WTC11 (cell line): ENCODE measurements at regions of chr15 and their contacts with region 1.

Region 1: DNA sequence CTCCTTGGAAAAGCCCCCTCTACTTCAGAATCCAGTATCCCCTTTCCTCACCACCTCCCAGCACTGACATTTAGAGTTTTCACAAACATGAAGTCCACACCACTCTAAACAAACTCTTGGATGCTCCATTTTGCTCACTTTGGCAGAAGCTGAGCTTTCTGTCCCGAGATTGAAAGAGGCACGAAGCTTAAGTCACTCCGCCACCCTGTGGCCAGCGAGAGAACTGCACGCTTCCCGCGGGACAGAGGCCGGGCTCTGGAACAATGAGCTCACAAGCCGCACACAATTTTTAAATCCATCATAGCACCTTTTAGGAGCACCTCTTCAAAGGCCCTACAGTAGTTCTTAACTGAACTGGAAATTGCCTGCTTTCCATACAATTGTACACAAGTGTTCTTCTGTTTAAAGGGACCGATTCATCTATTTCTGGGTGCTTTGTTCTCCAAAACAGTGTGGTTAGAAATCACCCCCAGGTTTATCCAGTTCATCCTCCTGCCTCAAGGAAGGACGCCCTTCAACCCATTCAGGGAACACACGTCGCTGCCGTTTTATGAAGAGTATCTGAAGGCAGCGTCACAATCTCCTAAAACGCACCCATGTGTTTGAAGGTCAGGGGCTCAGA is 226.1 kb downstream of the VPS13C start:
- DNase-seq: peak; percentile 87
- ATAC-seq: peak; percentile 48
- H3K4me3 Mint-ChIP-seq: no peak overlapping the region
- H3K27ac Mint-ChIP-seq: no peak overlapping the region
- H3K4me1 Mint-ChIP-seq: peaks cover 20% of the 10 kb centered on the region
- H3K27me3 Mint-ChIP-seq: no peaks in the 10 kb centered on the region
- CTCF ChIP-seq: peak; percentile 95

Region 2: GRCh38 chr15:61169904-61170695 is 664.1 kb before region 1 on chr15:
- CTCF ChIA-PET with region 1: interaction called, 67 read pairs
- POLR2A ChIA-PET with region 1: no interaction called
- DNase-seq: no peak
- ATAC-seq: peak; percentile 13
- H3K4me3 Mint-ChIP-seq: peak overlapping the region; percentile 8
- H3K27ac Mint-ChIP-seq: peak overlapping the region; percentile 98
- H3K4me1 Mint-ChIP-seq: peaks cover 72% of the 10 kb centered on the region
- H3K27me3 Mint-ChIP-seq: no peaks in the 10 kb centered on the region
- CTCF ChIP-seq: no peak

Region 3: GRCh38 chr15:61530779-61531178 is 303.4 kb before region 1 on chr15:
- CTCF ChIA-PET with region 1: interaction called, 39 read pairs
- POLR2A ChIA-PET with region 1: interaction called, 4 read pairs
- DNase-seq: peak; percentile 35
- ATAC-seq: peak; percentile 84
- H3K4me3 Mint-ChIP-seq: no peak overlapping the region
- H3K27ac Mint-ChIP-seq: no peak overlapping the region
- H3K4me1 Mint-ChIP-seq: peaks cover 18% of the 10 kb centered on the region
- H3K27me3 Mint-ChIP-seq: no peaks in the 10 kb centered on the region
- CTCF ChIP-seq: no peak

Region 4: DNA sequence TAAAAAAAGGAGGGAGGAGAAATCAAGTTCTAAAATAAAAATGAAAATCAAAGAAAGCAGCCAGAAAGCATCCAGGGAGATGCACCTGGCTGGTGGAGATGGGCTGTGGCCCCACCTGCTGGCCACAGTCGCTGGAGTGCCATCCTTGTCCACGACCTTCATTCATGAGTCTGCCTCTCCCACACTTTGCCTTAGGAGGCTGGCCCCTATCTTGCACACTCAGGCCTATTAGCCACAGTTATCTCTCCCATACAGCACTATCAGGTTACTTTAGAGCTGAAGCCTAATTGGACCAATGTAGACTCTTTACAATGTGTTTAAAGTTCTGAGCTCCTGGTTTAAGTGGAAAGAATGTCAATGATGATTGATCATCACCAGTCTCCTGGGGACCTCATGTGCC is 213.0 kb before region 1 on chr15:
- CTCF ChIA-PET with region 1: interaction called, 33 read pairs
- POLR2A ChIA-PET with region 1: no interaction called
- DNase-seq: peak; percentile 57
- ATAC-seq: peak; percentile 95
- H3K4me3 Mint-ChIP-seq: no peak overlapping the region
- H3K27ac Mint-ChIP-seq: no peak overlapping the region
- H3K4me1 Mint-ChIP-seq: peaks cover 10% of the 10 kb centered on the region
- H3K27me3 Mint-ChIP-seq: no peaks in the 10 kb centered on the region
- CTCF ChIP-seq: peak; percentile 65

Region 5: GRCh38 chr15:61668444-61668843 is 165.7 kb before region 1 on chr15:
- CTCF ChIA-PET with region 1: interaction called, 12 read pairs
- POLR2A ChIA-PET with region 1: no interaction called
- DNase-seq: no peak
- ATAC-seq: no peak
- H3K4me3 Mint-ChIP-seq: no peak overlapping the region
- H3K27ac Mint-ChIP-seq: no peak overlapping the region
- H3K4me1 Mint-ChIP-seq: peaks cover 2% of the 10 kb centered on the region; the same call in 1 of the 2 replicates
- H3K27me3 Mint-ChIP-seq: no peaks in the 10 kb centered on the region
- CTCF ChIP-seq: no peak

Region 6: GRCh38 chr15:61811952-61812351 is 22.2 kb before region 1 on chr15:
- CTCF ChIA-PET with region 1: interaction called, 22 read pairs
- POLR2A ChIA-PET with region 1: no interaction called
- DNase-seq: no peak
- ATAC-seq: no peak
- H3K4me3 Mint-ChIP-seq: no peak overlapping the region
- H3K27ac Mint-ChIP-seq: no peak overlapping the region
- H3K4me1 Mint-ChIP-seq: peaks cover 21% of the 10 kb centered on the region
- H3K27me3 Mint-ChIP-seq: no peaks in the 10 kb centered on the region
- CTCF ChIP-seq: no peak

Region 7: GRCh38 chr15:61906961-61907752 is 73.0 kb after region 1 on chr15:
- CTCF ChIA-PET with region 1: no interaction called
- POLR2A ChIA-PET with region 1: no interaction called
- DNase-seq: no peak
- ATAC-seq: no peak
- H3K4me3 Mint-ChIP-seq: no peak overlapping the region
- H3K27ac Mint-ChIP-seq: no peak overlapping the region
- H3K4me1 Mint-ChIP-seq: no peaks in the 10 kb centered on the region
- H3K27me3 Mint-ChIP-seq: no peaks in the 10 kb centered on the region
- CTCF ChIP-seq: no peak